Left cardiac atrium (tissue), 4 donors: ENCODE measurements at regions of chr9 and their contacts with region 1.

Region 1: GRCh38 chr9:35071814-35072460 is 488 bp downstream of the VCP start:
- DNase-seq: peak; percentile 91
- ATAC-seq: peak; percentile 83 to 91

Region 2: GRCh38 chr9:34994260-34994899 is 77.6 kb before region 1 on chr9:
- intact Hi-C with region 1: loop called in 1 of 2 experiments (anchors 10 kb)
- DNase-seq: no peak
- ATAC-seq: no peak

Region 3: DNA sequence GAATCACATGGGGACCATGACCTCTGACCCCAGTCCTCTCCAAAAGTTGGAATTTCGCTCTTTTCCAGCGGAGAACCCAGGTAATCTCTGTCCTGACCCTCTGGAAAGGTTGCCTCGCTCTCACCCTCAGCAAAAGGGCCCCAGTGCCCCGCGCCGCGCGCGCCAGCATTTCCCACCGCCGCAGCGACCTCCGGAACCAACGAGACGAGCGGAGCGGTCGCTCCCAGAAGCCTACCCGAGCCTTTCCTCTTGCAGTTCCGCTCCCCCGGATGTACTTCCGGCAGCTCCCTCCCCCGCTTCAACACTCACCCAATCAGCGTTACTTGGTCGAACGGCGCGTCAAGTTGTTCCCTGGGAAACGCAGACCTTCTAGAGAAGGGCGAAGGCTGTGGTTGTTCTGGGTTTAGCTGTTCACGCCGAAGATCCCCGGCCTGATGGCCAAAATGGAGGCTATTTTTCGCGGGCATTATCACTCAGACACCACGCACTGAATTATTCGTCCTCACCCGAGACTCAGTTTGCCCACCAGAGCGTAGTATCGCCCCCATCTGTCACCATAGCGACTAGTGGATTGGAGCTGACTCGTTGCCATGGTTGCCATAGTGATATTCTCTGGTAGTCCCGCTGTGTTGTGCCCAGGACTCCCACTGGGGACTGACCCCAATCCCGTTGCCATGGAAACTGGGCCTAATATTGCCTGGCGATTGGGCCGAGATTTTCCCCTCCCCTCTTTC is 31.2 kb after region 1 on chr9 and contains the start of gene STOML2:
- intact Hi-C with region 1: loop called in 1 of 2 experiments (anchors 2 kb)
- DNase-seq: peak; percentile 95
- ATAC-seq: peak; percentile 97 to 98
- total RNA-seq, gene STOML2: 95.7 to 97.4 TPM